ENCODE measurements at regions of chr3 and their contacts with region 1.

Region 1: DNA sequence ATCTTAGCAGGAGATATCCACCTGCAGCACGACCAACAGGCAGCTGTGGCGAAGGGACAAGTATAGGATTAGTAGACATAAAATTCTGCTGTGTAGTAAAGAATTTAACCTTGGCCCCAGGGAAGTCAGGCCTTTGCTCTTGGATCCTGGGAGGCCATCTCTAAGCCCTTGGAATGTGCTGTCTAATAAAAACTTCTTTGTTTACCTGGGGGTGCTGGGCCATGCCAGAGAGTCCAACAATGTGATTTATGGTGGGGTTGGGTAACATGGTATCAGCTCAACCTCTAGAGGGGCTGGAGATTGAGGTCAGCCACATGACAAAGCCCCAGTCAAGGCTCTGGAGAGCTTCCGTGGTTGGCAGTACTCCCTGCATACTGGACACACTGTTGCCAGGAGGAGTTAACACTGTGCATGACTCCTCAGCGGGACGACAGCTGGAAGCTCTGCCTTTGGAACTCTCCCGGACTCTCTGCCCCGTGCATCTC is 52.4 kb downstream of the HEG1 start:
- DNase-seq: peak; percentile 72
- ATAC-seq: peak; percentile 74
- H3K4me3 ChIP-seq: no peak overlapping the region
- H3K27ac ChIP-seq: no peak overlapping the region
- H3K4me1 ChIP-seq: peaks cover 14% of the 10 kb centered on the region
- H3K27me3 ChIP-seq: no peaks in the 10 kb centered on the region
- CTCF ChIP-seq: no peak
- POLR2A ChIP-seq: no peak
- RAD21 ChIP-seq: no peak

Region 2: GRCh38 chr3:125045965-125046364 is 42.6 kb after region 1 on chr3:
- CTCF ChIA-PET with region 1: no interaction called
- POLR2A ChIA-PET with region 1: no interaction called
- dilution Hi-C with region 1: no loop called
- in situ Hi-C with region 1: no loop called
- intact Hi-C with region 1: no loop called
- DNase-seq: peak; percentile 87
- ATAC-seq: peak; percentile 89
- H3K4me3 ChIP-seq: no peak overlapping the region
- H3K27ac ChIP-seq: no peak overlapping the region
- H3K4me1 ChIP-seq: peaks cover 38% of the 10 kb centered on the region
- H3K27me3 ChIP-seq: no peaks in the 10 kb centered on the region
- CTCF ChIP-seq: peak; percentile 45
- POLR2A ChIP-seq: no peak
- RAD21 ChIP-seq: peak; percentile 60

Region 3: GRCh38 chr3:125119752-125120378 is 116.5 kb after region 1 on chr3:
- CTCF ChIA-PET with region 1: no interaction called
- POLR2A ChIA-PET with region 1: no interaction called
- dilution Hi-C with region 1: no loop called
- in situ Hi-C with region 1: no loop called
- intact Hi-C with region 1: loop called (anchors 5 kb)
- DNase-seq: no peak
- ATAC-seq: no peak
- H3K4me3 ChIP-seq: no peak overlapping the region
- H3K27ac ChIP-seq: no peak overlapping the region
- H3K4me1 ChIP-seq: peaks cover 28% of the 10 kb centered on the region
- H3K27me3 ChIP-seq: no peaks in the 10 kb centered on the region
- CTCF ChIP-seq: no peak
- POLR2A ChIP-seq: no peak
- RAD21 ChIP-seq: no peak